Adrenal gland (tissue), 19 donors: ENCODE measurements at regions of chr7 and their contacts with region 1.

Region 1: GRCh38 chr7:47088329-47089067 is 493.4 kb downstream of the TNS3 start:
- DNase-seq: peak; percentile 38 to 74 (median 59)
- H3K4me3 ChIP-seq: no peak overlapping the region
- H3K27ac ChIP-seq: no peak overlapping the region
- H3K4me1 ChIP-seq: no peaks in the 10 kb centered on the region
- H3K27me3 ChIP-seq: peaks cover 6% of the 10 kb centered on the region
- CTCF ChIP-seq: peak; percentile 66 to 90 (median 86)
- POLR2A ChIP-seq: no peak

Region 2: DNA sequence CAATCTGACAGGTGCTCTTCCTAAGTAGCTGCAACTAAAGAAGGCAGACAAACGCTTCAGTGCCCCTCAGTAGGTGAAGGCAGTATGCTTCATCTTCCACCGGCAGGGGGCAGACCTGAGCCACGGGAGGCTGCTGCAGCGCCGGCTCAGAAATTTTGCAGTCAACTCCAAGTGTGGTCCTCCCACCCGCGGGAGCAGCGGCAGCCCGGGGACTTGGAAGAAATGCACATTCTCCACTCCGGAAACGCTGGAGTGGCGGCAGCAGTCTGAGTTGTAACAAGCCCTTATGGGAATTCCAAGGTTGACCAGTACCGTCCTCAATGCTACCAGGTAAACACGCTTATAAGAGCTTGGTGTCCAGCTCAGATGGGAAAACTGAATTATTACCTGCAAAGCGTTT is 1170.8 kb before region 1 on chr7:
- intact Hi-C with region 1: loop called (anchors 5 to 10 kb)
- DNase-seq: peak; percentile 59 to 84 (median 75)
- H3K4me3 ChIP-seq: no peak overlapping the region
- H3K27ac ChIP-seq: no peak overlapping the region
- H3K4me1 ChIP-seq: peaks cover 0 to 4% of the 10 kb centered on the region in 2 donors
- H3K27me3 ChIP-seq: peaks cover 43% of the 10 kb centered on the region
- CTCF ChIP-seq: peak; percentile 67 to 98 (median 84)
- POLR2A ChIP-seq: no peak

Region 3: GRCh38 chr7:45923290-45923689 is 1165.2 kb before region 1 on chr7:
- intact Hi-C with region 1: loop called (anchors 5 to 10 kb)
- DNase-seq: peak; percentile 66 to 85 (median 70)
- H3K4me3 ChIP-seq: peak overlapping the region in 1 of 4 donors; percentile 25
- H3K27ac ChIP-seq: no peak overlapping the region
- H3K4me1 ChIP-seq: peaks cover 0 to 4% of the 10 kb centered on the region in 2 donors
- H3K27me3 ChIP-seq: peaks cover 43% of the 10 kb centered on the region
- CTCF ChIP-seq: peak; percentile 74 to 92 (median 76)
- POLR2A ChIP-seq: no peak

Region 4: GRCh38 chr7:46764100-46764936 is 324.2 kb before region 1 on chr7:
- intact Hi-C with region 1: loop called in 1 of 2 experiments (anchors 10 kb)
- DNase-seq: peak; percentile 84 to 90 (median 87)
- H3K4me3 ChIP-seq: no peak overlapping the region
- H3K27ac ChIP-seq: no peak overlapping the region
- H3K4me1 ChIP-seq: no peaks in the 10 kb centered on the region
- H3K27me3 ChIP-seq: no peaks in the 10 kb centered on the region
- CTCF ChIP-seq: no peak
- POLR2A ChIP-seq: no peak

Region 5: GRCh38 chr7:46776790-46777189 is 311.7 kb before region 1 on chr7:
- intact Hi-C with region 1: loop called in 1 of 2 experiments (anchors 5 kb)
- DNase-seq: peak in 1 of 7 donors; percentile 4
- H3K4me3 ChIP-seq: no peak overlapping the region
- H3K27ac ChIP-seq: no peak overlapping the region
- H3K4me1 ChIP-seq: no peaks in the 10 kb centered on the region
- H3K27me3 ChIP-seq: no peaks in the 10 kb centered on the region
- CTCF ChIP-seq: peak; percentile 15 to 62 (median 56)
- POLR2A ChIP-seq: no peak